PC-9 (cell line): ENCODE measurements at regions of chr7 and their contacts with region 1.

Region 1: DNA sequence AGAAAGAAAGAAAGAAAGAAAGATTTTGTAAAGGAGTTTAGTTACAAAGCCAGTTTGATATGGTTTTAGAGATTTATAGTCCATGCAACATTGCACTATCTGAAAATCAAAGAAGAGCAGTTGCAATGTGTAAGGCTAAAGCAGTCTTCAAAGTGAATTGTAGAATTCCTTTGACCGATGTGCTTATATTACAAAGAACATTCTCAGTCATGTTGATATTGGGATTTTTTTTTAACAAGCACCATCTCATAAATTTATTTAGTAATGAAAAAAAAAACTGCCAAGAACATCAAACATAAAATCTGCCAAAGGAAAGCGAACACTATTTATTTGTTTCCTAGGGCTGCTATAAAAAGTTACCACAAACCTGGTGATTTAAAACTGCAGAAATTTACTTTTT is 133.3 kb downstream of the DGKB start:
- DNase-seq: no peak
- H3K4me3 ChIP-seq: no peak overlapping the region
- H3K27ac ChIP-seq: no peak overlapping the region
- H3K4me1 ChIP-seq: no peaks in the 10 kb centered on the region
- H3K27me3 ChIP-seq: no peaks in the 10 kb centered on the region
- CTCF ChIP-seq: no peak

Region 2: DNA sequence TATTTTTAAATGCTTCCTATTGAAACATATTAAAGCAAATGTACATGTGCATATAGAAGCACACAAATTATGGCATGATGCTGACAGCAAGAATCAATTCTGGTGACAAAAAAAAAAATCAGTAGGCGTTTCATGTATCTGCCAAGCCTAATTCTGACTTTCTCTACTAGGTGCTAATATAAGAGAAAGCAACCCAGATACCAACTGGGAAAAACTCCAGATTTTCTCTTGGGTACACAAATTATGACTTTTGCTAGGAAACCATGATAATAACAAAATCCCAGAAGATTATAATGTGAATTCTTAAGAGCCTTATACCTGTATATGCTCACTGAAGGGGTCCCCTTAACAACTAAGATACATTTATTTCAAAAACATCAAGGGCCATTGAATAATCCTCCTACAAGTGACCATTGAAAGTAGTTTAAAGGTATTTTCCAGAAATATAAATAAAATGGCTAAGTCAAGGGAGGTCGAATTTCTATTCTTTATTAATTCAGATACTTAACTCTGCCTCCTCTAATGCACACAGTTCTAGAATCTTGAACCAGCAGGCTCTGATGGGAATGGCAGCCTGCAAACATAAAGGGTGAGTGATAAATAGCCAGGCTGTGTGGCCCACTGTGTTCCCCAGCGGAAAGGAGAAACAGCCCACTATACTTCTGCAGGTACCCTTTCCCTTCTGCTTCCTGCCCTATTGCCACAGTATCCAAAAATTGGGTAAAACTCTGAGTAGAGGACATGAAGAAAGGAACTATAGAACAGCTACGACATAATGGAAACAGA is 48.8 kb after region 1 on chr7:
- CTCF ChIA-PET with region 1: no interaction called
- POLR2A ChIA-PET with region 1: no interaction called
- intact Hi-C with region 1: loop called (anchors 1 kb)
- DNase-seq: peak in 1 of 2 experiments; percentile 29
- H3K4me3 ChIP-seq: no peak overlapping the region
- H3K27ac ChIP-seq: no peak overlapping the region
- H3K4me1 ChIP-seq: no peaks in the 10 kb centered on the region
- H3K27me3 ChIP-seq: no peaks in the 10 kb centered on the region
- CTCF ChIP-seq: no peak